ENCODE measurements at regions of chr1 and their contacts with region 1.

Region 1: GRCh38 chr1:39691262-39692151 is at the start of gene HPCAL4:
- DNase-seq: peak; percentile 81 to 92 (median 87)
- H3K4me3 ChIP-seq: peak within 1 kb of the TSS; percentile 78
- H3K4me3 Mint-ChIP-seq: peak within 1 kb of the TSS; percentile 75 to 89 (median 80)
- H3K27ac ChIP-seq: peak within 1 kb of the TSS; percentile 78
- H3K27ac Mint-ChIP-seq: peak within 1 kb of the TSS; percentile 52 to 87 (median 72)
- H3K4me1 ChIP-seq: peaks cover 18% of the 10 kb centered on the region
- H3K4me1 Mint-ChIP-seq: peaks cover 14 to 51% (median 23%) of the 10 kb centered on the region in 3 donors
- H3K27me3 ChIP-seq: peaks cover 17% of the 10 kb centered on the region
- H3K27me3 Mint-ChIP-seq: peaks cover 5 to 33% of the 10 kb centered on the region in 2 donors
- total RNA-seq, gene HPCAL4: 1.9 to 2.0 TPM

Region 2: DNA sequence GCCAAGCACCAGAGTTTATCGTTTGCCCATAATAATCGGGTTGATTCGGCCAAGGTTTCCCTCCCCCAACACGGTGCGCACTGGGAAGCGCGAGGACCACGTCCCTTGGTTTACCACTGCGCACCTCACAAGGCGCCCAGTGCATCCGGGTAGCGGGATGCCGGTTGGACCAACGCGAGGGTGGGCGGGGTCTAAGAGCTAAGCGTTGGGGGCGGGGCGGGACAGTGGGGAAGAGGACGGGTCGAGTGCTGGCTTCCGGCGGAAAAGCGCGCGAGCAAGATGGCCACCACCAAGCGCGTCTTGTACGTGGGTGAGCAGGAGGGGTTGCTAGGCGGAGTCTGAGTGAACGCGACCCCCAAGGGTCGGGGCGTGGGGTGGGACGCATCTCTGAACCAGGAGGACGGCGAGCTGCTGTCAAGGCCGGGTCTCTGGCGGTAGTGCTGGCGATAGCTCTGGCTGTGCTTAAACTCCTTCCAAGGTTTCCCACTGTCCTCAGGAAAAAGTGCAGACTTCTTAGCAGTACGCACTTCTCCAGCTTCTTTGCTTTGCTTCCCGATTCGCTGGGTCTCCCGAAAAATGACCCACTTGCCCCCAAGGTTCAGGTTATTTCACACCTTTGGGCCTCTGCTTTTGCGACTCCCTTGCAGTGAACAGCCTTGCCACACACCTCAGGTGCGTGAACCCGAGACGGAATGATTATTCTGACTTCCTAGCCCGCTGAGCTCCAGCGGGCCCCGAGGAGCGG is 47.3 kb after region 1 on chr1 and contains the start of gene PPIE:
- CTCF ChIA-PET with region 1: no interaction called
- POLR2A ChIA-PET with region 1: interaction called, 10 read pairs
- DNase-seq: peak; percentile 79 to 94 (median 85)
- H3K4me3 ChIP-seq: peak within 1 kb of the TSS; percentile 84
- H3K4me3 Mint-ChIP-seq: peak within 1 kb of the TSS; percentile 97 to 99 (median 97)
- H3K27ac ChIP-seq: peak within 1 kb of the TSS; percentile 79
- H3K27ac Mint-ChIP-seq: peak within 1 kb of the TSS; percentile 83 to 98 (median 97)
- H3K4me1 ChIP-seq: peaks cover 25% of the 10 kb centered on the region
- H3K4me1 Mint-ChIP-seq: peaks cover 31 to 45% (median 37%) of the 10 kb centered on the region in 3 donors
- H3K27me3 ChIP-seq: peaks cover 4% of the 10 kb centered on the region
- H3K27me3 Mint-ChIP-seq: peaks cover 11 to 20% of the 10 kb centered on the region in 2 donors
- total RNA-seq, gene PPIE: 61.2 to 65.2 TPM

Measured in CD8-positive, alpha-beta memory T cell (primary cell).